ENCODE measurements at regions of chr5 and their contacts with region 1.

Region 1: GRCh38 chr5:143403593-143404415 is at the start of gene NR3C1:
- DNase-seq: peak; percentile 60 to 85
- H3K4me3 ChIP-seq: peak within 1 kb of the TSS; percentile 96
- H3K27ac ChIP-seq: peak within 1 kb of the TSS; percentile 94
- H3K4me1 ChIP-seq: peaks cover 29% of the 10 kb centered on the region
- H3K27me3 ChIP-seq: no peaks in the 10 kb centered on the region
- CTCF ChIP-seq: peak; percentile 39; the same call in 1 of the 2 replicates
- total RNA-seq, gene NR3C1: 48.8 and 52.8 TPM in 2 replicates

Region 2: GRCh38 chr5:143002459-143003328 is 401.1 kb before region 1 on chr5:
- CTCF ChIA-PET with region 1: no interaction called
- POLR2A ChIA-PET with region 1: no interaction called
- intact Hi-C with region 1: loop called (anchors 5 kb)
- DNase-seq: no peak
- H3K4me3 ChIP-seq: no peak overlapping the region
- H3K27ac ChIP-seq: no peak overlapping the region
- H3K4me1 ChIP-seq: no peaks in the 10 kb centered on the region
- H3K27me3 ChIP-seq: no peaks in the 10 kb centered on the region
- CTCF ChIP-seq: peak; percentile 65

Region 3: GRCh38 chr5:143244000-143244736 is 159.6 kb before region 1 on chr5:
- CTCF ChIA-PET with region 1: no interaction called
- POLR2A ChIA-PET with region 1: interaction called, 3 read pairs
- intact Hi-C with region 1: loop called (anchors 1 kb)
- DNase-seq: peak; percentile 84 to 97
- H3K4me3 ChIP-seq: peak overlapping the region; percentile 43; the same call in 1 of the 2 replicates
- H3K27ac ChIP-seq: peak overlapping the region; percentile 91
- H3K4me1 ChIP-seq: peaks cover 68% of the 10 kb centered on the region
- H3K27me3 ChIP-seq: no peaks in the 10 kb centered on the region
- CTCF ChIP-seq: no peak

Region 4: DNA sequence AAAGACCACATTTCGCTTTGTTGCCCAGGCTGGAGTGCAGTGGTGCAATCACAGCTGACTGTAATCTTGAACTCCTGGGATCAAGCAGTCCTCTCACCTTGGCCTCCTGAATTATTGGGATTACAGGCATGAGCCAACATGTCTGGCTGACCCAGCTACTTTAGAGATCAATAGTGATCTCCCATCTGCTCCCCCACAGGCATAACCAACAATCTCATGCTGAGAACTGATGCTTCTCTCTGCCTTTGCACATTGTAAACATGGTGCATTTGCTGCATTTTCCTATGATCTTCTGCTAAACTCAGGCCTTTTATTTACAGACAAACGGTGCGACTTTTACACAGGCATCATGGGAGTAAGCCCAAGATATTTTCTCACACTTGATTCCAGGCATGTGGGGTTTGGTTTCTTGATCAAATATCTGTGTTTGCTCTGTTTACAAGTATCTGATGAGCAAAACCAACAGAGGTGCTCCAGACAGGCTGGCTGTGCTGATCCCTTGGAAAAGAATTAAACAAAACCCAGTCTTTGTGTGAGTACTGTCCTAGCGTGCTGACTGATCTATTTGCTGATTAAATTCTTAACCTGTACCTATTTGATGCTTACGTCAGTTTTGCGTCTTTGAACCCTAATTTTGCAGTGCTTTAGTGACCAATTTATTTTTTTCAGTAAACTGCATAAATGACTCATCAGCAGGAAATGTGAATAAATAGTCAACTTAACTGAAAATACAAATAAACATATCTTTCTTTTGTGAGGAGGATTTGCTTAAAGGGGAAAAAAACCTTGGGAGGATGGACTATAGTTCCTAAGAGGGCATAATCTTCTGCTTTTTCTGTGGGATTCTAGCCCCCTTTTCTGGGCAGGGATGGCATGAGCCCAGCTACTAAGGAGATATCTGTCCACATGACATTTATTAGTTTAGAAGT is 191.4 kb after region 1 on chr5:
- CTCF ChIA-PET with region 1: no interaction called
- POLR2A ChIA-PET with region 1: no interaction called
- intact Hi-C with region 1: loop called (anchors 1 kb)
- DNase-seq: peak; percentile 46 to 83
- H3K4me3 ChIP-seq: 0 out of 2 replicates have a peak overlapping the region, but pooled peaks have one; percentile 16
- H3K27ac ChIP-seq: peak overlapping the region; percentile 97
- H3K4me1 ChIP-seq: peaks cover 29% of the 10 kb centered on the region
- H3K27me3 ChIP-seq: no peaks in the 10 kb centered on the region
- CTCF ChIP-seq: no peak

Region 5: GRCh38 chr5:143741421-143741820 is 337.6 kb after region 1 on chr5:
- CTCF ChIA-PET with region 1: no interaction called
- POLR2A ChIA-PET with region 1: no interaction called
- intact Hi-C with region 1: no loop called
- DNase-seq: no peak
- H3K4me3 ChIP-seq: no peak overlapping the region
- H3K27ac ChIP-seq: no peak overlapping the region
- H3K4me1 ChIP-seq: no peaks in the 10 kb centered on the region
- H3K27me3 ChIP-seq: no peaks in the 10 kb centered on the region
- CTCF ChIP-seq: no peak

Region 6: GRCh38 chr5:143824851-143825720 is 421.3 kb after region 1 on chr5:
- CTCF ChIA-PET with region 1: no interaction called
- POLR2A ChIA-PET with region 1: no interaction called
- intact Hi-C with region 1: loop called (anchors 1 kb)
- DNase-seq: peak; percentile 42 to 79
- H3K4me3 ChIP-seq: no peak overlapping the region
- H3K27ac ChIP-seq: no peak overlapping the region
- H3K4me1 ChIP-seq: peaks cover 15% of the 10 kb centered on the region
- H3K27me3 ChIP-seq: no peaks in the 10 kb centered on the region
- CTCF ChIP-seq: peak; percentile 97

Region 7: GRCh38 chr5:144170276-144171024 is 766.6 kb after region 1 on chr5 and contains the starts of genes KCTD16 and YIPF5:
- CTCF ChIA-PET with region 1: no interaction called
- POLR2A ChIA-PET with region 1: no interaction called
- intact Hi-C with region 1: loop called (anchors 10 kb)
- DNase-seq: peak; percentile 95 to 98
- H3K4me3 ChIP-seq: peak within 1 kb of the TSS; percentile 87
- H3K27ac ChIP-seq: peak within 1 kb of the TSS; percentile 16; the same call in 1 of the 2 replicates
- H3K4me1 ChIP-seq: peaks cover 17% of the 10 kb centered on the region
- H3K27me3 ChIP-seq: no peaks in the 10 kb centered on the region
- CTCF ChIP-seq: no peak
- total RNA-seq, gene KCTD16: 0.28 and 0.33 TPM in 2 replicates
- total RNA-seq, gene YIPF5: 35.9 and 65.8 TPM in 2 replicates

Measured in PC-9 (cell line).